Mammary epithelial cell (primary cell): ENCODE measurements at regions of chr5 and their contacts with region 1.

Region 1: DNA sequence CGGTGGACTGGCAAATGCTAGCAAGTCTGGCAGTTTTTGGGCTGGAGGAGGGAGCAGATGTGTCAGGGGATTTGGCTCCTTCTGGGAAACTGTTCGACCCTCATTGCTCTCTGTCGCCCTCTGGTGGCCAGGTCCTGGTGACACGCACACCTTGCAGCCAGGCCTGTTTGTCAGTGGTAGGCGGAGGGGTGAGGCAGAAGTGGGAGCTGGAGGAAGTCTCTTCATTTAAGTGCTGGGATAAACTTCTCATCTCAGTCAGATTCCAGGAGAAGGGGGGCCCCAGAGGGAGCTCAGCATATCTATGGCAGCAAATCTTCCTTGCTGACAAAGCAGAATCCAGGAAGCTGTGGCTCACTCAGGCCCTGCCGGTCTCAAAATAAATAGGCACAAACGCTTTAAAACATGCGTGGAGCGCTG is 326.5 kb downstream of the ZSWIM6 start:
- DNase-seq: peak; percentile 55
- H3K4me3 ChIP-seq: no peak overlapping the region
- H3K27ac ChIP-seq: no peak overlapping the region
- H3K4me1 ChIP-seq: no peaks in the 10 kb centered on the region
- H3K27me3 ChIP-seq: no peaks in the 10 kb centered on the region
- CTCF ChIP-seq: peak; percentile 92 to 95

Region 2: DNA sequence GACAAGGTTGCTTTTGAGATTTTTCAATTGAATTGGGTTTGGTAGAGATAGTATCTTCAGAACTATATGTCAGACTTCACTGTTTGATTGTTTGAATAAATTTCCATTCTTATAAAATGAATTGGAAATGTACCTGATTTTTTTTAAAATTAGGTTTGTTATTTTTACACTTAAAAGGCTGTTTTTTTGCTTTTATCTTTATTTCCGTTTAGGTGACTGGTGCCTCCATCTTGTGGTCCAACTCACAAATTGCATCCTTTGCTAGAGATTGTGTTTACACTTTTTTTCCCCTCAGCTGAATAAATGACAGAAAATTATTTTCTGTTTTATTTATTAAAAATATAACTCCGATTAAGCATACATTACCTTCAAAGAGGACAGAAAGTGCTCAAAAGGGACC is 698.0 kb before region 1 on chr5:
- CTCF ChIA-PET with region 1: interaction called, 3 read pairs
- dilution Hi-C with region 1: no loop called
- in situ Hi-C with region 1: no loop called
- intact Hi-C with region 1: loop called (anchors 2 kb)
- DNase-seq: no peak
- H3K4me3 ChIP-seq: no peak overlapping the region
- H3K27ac ChIP-seq: no peak overlapping the region
- H3K4me1 ChIP-seq: no peaks in the 10 kb centered on the region
- H3K27me3 ChIP-seq: no peaks in the 10 kb centered on the region
- CTCF ChIP-seq: peak; percentile 51 to 56

Region 3: DNA sequence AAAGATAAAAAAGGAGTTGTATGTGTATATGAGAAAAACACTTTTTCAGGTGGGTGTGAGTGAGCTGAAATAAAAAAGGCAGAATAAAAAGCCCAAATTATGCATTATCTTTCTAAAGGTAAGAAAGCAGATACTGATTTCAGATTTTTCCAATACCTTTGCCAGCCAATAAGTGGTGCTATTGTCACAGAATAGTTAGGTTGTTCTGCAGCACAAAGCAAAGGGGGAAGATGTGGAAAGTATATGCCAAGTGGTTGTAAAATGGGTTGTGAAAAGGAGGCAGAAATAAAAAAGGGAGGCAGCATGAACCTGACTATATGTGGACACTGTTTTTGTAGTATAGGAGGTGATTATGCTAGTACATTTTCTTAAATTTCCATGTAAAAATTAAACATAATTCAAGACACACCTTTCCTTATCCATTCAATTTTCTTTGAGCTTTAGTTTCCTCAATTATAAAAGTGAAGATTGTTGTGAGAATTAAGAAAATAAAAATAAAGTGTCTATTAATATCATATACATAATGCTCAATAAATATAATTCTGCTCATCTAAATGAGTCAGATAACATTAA is 603.1 kb before region 1 on chr5:
- CTCF ChIA-PET with region 1: interaction called, 3 read pairs
- dilution Hi-C with region 1: no loop called
- in situ Hi-C with region 1: no loop called
- intact Hi-C with region 1: loop called (anchors 1 kb)
- DNase-seq: peak; percentile 40
- H3K4me3 ChIP-seq: no peak overlapping the region
- H3K27ac ChIP-seq: no peak overlapping the region
- H3K4me1 ChIP-seq: peaks cover 34% of the 10 kb centered on the region
- H3K27me3 ChIP-seq: no peaks in the 10 kb centered on the region
- CTCF ChIP-seq: peak; percentile 73 to 85

Region 4: DNA sequence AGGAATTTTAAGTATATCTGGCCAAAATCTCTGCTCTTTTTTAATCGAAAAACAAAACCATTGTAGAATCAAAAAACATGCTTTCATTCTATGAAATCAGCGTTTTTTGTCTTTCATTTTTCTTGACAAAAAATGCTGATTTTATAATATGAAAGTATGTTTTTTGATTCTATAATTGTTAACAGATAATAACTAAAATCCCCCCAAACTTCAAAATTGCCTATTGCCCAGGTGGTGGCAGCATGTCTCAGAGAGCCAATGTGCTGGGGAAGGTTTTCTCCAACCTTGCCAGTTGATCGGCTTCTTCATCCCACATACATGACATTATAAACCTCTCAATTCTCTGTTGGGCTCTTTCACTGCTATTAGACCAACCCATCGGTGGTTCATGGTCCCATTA is 491.2 kb before region 1 on chr5:
- CTCF ChIA-PET with region 1: interaction called, 4 read pairs
- dilution Hi-C with region 1: no loop called
- in situ Hi-C with region 1: loop called in 1 of 2 experiments (anchors 25 kb)
- intact Hi-C with region 1: loop called (anchors 1 kb)
- DNase-seq: peak; percentile 32
- H3K4me3 ChIP-seq: no peak overlapping the region
- H3K27ac ChIP-seq: no peak overlapping the region
- H3K4me1 ChIP-seq: peaks cover 5% of the 10 kb centered on the region
- H3K27me3 ChIP-seq: no peaks in the 10 kb centered on the region
- CTCF ChIP-seq: peak; percentile 40 to 62

Region 5: GRCh38 chr5:61701877-61702602 is 43.4 kb after region 1 on chr5:
- CTCF ChIA-PET with region 1: no interaction called
- dilution Hi-C with region 1: no loop called
- in situ Hi-C with region 1: no loop called
- intact Hi-C with region 1: no loop called
- DNase-seq: no peak
- H3K4me3 ChIP-seq: no peak overlapping the region
- H3K27ac ChIP-seq: no peak overlapping the region
- H3K4me1 ChIP-seq: peaks cover 5% of the 10 kb centered on the region
- H3K27me3 ChIP-seq: no peaks in the 10 kb centered on the region
- CTCF ChIP-seq: no peak

Region 6: DNA sequence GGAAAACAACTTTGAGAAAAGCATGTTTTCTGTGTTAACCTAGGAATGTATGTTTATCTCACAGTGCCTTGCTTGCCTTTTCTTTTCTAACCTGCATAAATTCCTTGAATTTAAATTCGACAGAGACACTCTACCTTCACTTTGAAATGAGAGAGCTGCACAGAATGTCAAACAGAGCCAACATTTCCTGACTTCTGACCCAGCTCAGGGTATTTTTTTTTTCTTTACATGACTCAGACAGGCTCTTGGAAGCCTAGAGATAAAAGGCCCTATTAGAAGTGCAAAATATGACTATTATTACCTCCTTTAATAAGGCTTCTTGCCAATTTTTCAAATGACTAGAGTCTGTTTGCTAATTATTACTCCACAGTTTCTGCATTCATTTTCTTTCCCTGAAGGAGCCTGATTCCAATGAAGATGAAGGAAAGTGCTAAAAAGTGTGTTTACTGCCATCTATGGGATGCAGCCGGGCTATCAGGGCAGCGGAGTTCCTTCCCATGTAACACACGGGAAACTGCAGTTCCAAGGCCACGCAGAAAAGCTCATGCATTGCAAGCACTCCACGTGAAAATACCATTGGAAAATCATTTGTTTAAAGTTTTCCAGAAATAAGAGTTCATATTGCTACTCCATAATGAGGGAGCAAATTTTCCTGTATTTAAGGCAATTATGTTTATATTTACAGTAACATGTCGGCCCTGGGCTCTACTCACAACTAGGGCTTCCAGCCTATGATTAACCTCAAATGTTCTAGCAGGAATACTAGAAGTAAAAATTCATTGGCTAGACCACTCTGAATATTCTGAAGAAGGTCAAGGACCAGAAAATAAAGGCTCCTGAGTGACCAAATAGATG is 159.1 kb after region 1 on chr5:
- CTCF ChIA-PET with region 1: no interaction called
- dilution Hi-C with region 1: no loop called
- in situ Hi-C with region 1: no loop called
- intact Hi-C with region 1: loop called (anchors 5 kb)
- DNase-seq: peak; percentile 46
- H3K4me3 ChIP-seq: no peak overlapping the region
- H3K27ac ChIP-seq: no peak overlapping the region
- H3K4me1 ChIP-seq: no peaks in the 10 kb centered on the region
- H3K27me3 ChIP-seq: no peaks in the 10 kb centered on the region
- CTCF ChIP-seq: peak; percentile 76 to 84